HCT116 (cell line): ENCODE measurements at regions of chr11 and their contacts with region 1.

Region 1: DNA sequence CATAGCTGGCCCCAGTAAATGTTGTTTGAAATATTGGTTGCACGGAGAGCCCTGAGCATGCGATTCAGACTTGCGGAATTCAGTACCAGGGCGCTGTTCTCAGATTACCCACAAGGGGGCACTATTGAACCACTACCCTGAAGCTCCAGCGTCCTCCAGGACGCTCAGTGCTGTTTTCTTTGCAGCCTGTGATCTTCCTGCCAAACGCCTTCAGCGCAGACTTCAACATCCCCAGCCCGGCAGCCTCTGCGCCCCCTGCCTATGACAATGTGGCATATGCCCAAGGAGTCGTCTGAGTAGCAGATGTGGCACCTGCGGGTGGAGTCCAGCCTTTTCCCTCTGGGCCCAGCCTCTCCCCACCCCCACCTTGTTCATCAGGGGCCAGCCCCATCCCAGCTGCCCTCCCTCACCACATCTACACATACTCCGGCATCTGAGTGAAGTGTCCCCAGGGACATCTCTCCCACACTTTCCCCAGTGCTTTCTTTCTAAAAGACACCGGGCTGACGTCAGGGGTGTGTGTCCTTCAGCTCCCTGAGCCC is 9.6 kb upstream of the MS4A10 start:
- DNase-seq: peak; percentile 85
- ATAC-seq: peak; percentile 95
- H3K4me3 ChIP-seq: no peak overlapping the region
- H3K27ac ChIP-seq: no peak overlapping the region; the same call in 1 of the 2 replicates
- H3K4me1 ChIP-seq: peaks cover 0 to 19% of the 10 kb centered on the region in 2 experiments; a peak in 3 of 4 replicates
- H3K27me3 ChIP-seq: no peaks in the 10 kb centered on the region
- CTCF ChIP-seq: peak; percentile 87 to 92 (median 90)
- POLR2A ChIP-seq: no peak
- RAD21 ChIP-seq: peak; percentile 91

Region 2: DNA sequence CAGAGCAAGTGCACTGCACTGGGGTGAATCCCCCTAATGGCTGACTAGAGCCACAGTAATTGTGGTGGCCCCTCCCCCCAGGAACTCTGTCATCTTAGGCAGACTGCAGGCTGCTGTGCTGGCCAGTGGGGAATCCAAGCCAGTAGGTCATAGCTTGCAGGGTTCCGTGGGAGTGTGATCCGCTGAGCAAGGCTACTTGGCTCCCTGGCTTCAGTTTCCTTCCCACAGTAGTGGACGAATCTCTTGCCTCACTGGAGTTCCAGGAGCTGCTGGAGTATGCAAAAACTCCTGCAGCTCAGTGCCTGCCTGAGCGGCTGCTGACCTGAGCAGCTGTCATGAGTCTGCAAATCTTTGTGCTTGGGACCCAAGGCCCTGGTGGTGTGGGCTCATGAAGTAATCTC is 883.7 kb before region 1 on chr11:
- CTCF ChIA-PET with region 1: no interaction called
- POLR2A ChIA-PET with region 1: no interaction called
- RAD21 ChIA-PET with region 1: no interaction called
- intact Hi-C with region 1: no loop called
- DNase-seq: no peak
- ATAC-seq: no peak; the same call in 1 of the 2 replicates
- H3K4me3 ChIP-seq: no peak overlapping the region
- H3K27ac ChIP-seq: no peak overlapping the region
- H3K4me1 ChIP-seq: no peaks in the 10 kb centered on the region
- H3K27me3 ChIP-seq: no peaks in the 10 kb centered on the region
- CTCF ChIP-seq: no peak
- POLR2A ChIP-seq: no peak
- RAD21 ChIP-seq: no peak

Region 3: DNA sequence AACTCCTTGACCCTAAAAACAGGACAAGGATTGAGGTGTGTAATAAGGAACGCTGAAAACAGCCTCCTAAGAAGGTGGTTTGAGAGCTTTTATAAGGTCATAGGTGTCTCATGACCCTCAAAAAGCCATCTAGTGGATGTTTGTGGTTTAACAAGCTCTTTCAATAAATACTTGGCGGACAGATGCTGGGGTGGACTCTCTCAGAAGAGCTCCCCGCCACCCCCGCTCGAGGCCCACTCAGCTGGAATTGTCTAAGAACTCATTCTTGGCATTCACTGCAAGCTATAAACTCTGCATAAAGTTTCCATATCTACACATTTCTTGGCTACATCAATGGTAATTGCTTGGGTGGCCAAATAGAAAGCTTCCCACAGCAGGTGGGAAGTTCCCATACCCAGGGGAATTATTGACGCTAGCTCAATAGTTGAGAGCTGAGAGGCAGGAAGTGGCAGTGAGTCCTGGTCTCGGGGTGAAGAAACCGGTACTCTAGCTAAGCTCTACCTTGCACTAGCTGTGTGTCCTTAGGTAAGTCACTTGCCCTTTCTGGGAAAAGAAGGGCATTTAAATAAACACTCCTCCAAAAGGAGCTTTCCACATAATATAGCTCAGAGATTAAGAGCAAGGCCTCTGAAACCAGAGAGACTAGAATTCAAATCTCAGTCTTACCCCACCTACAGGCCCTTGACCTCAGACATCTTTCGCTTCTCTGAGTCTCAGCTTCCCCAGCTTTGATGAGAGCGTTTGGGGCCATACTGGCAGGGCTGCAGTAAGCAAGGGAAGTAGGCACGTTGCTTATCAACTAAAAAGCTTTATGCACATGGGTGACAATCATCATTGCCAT is 12.4 kb before region 1 on chr11:
- CTCF ChIA-PET with region 1: interaction called, 31 read pairs
- POLR2A ChIA-PET with region 1: interaction called, 3 read pairs
- RAD21 ChIA-PET with region 1: interaction called in 1 of 2 experiments, 3 read pairs
- intact Hi-C with region 1: no loop called
- DNase-seq: peak; percentile 7
- ATAC-seq: peak; percentile 49
- H3K4me3 ChIP-seq: no peak overlapping the region
- H3K27ac ChIP-seq: no peak overlapping the region
- H3K4me1 ChIP-seq: peaks cover 8 to 10% of the 10 kb centered on the region in 2 experiments; a peak in 2 of 4 replicates
- H3K27me3 ChIP-seq: 0 out of 2 replicates have a peak, but pooled peaks cover 5% of the 10 kb centered on the region
- CTCF ChIP-seq: peak; percentile 34 to 59 (median 47); a peak in 5 of 6 replicates
- POLR2A ChIP-seq: no peak
- RAD21 ChIP-seq: peak; percentile 21; the same call in 1 of the 2 replicates

Region 4: GRCh38 chr11:60887556-60887955 is 112.1 kb after region 1 on chr11:
- CTCF ChIA-PET with region 1: interaction called, 21 read pairs
- POLR2A ChIA-PET with region 1: interaction called, 3 read pairs
- RAD21 ChIA-PET with region 1: interaction called, 4 to 6 read pairs
- intact Hi-C with region 1: loop called (anchors 2 kb)
- DNase-seq: peak; percentile 31
- ATAC-seq: peak; percentile 95
- H3K4me3 ChIP-seq: no peak overlapping the region
- H3K27ac ChIP-seq: no peak overlapping the region
- H3K4me1 ChIP-seq: no peaks in the 10 kb centered on the region
- H3K27me3 ChIP-seq: no peaks in the 10 kb centered on the region
- CTCF ChIP-seq: peak; percentile 61; a peak in 5 of 6 replicates
- POLR2A ChIP-seq: no peak
- RAD21 ChIP-seq: peak; percentile 78

Region 5: DNA sequence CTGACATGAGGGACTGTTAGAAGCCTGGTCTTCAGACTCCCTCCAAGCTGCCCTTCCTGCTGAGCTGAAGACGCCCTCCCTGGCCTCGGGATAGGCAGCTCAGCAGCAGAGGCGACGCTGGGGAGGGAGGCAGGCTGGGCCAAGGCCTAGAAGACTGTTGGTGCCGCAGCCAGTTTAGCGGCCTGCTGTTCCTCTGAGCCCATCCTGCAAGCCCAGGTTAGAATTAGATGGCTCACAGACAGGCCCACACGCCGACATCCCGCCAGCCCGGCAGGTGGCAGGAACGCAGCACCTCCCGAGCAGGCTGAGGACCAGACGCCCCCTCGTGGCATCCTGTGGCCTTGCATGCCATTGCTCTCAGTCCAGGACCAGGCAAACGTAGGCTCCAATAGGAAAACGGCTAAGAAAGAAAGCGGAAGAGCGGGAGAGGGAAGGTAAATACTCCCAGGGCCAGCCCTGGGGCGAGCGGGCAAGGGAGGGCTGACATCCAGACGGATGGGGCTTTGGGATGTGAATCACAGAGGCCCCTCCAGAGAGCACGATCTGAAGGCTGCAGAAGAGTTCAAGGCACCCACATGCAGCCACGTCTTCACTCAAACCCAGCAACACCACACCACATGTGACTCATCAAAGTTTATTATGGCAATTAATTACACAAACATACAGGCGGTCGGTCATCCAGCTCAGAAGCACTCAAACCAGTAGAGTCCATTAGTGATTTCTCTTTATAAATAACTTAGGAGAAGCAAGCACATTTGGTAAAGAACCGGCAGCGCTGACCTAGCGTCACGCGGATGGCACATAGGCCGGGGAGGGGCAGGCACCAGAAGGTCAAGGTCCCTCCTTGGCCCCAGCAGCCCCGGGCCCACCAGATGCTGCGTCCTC is 354.4 kb after region 1 on chr11:
- CTCF ChIA-PET with region 1: no interaction called
- POLR2A ChIA-PET with region 1: no interaction called
- RAD21 ChIA-PET with region 1: no interaction called
- intact Hi-C with region 1: loop called (anchors 1 kb)
- DNase-seq: peak; percentile 73
- ATAC-seq: peak; percentile 95
- H3K4me3 ChIP-seq: peak overlapping the region in 1 of 2 experiments; percentile 37; a peak in 3 of 4 replicates
- H3K27ac ChIP-seq: peak overlapping the region; percentile 45
- H3K4me1 ChIP-seq: peaks cover 6 to 18% of the 10 kb centered on the region in 2 experiments; a peak in 3 of 4 replicates
- H3K27me3 ChIP-seq: no peaks in the 10 kb centered on the region
- CTCF ChIP-seq: peak; percentile 100
- POLR2A ChIP-seq: no peak
- RAD21 ChIP-seq: peak; percentile 98

Region 6: DNA sequence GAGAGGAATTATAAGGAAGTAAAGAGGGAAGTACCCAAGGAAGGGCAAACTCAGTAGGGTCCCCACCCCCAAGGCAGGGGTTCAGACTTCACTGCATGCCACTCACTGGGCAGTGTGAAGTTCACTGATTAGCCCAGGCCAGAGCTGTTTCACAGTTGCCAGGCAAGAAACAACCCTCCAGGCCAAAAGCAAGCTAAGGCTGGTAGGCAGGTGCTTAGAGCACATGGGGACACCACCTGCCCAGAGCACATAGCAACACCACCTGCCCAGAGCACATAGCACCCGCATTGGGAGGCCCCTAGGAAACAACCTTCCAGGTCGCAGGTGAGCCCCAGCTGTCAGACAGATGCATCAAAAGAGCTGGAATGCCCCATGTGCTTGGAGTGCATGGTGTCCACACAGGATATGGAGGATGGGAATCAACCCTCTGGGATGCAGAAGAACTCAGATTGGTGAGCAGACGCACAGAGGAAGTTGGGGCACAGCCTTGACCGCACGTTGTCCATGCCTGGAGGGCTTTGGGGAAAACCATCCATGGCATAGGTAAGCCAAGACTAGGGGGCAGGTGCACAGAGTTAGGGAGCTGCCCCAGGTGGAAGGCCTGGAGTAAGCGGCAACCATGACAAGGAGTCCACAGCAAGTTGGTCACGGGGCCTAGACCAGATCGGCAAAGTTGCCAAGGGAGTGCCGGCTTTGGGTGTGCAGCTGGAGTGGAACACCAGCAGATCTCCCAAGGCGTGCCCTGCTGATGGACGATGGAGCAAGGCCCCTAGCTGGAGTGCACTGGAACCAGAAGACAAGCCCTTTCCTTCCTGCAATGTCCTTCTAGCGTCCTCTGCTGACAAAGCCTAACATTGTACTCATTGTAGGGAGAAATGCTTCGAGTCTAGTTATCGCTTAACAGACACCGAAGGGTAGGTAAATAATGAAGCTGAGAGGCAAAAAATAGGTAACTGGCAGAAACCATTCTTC is 609.1 kb after region 1 on chr11:
- CTCF ChIA-PET with region 1: no interaction called
- POLR2A ChIA-PET with region 1: no interaction called
- RAD21 ChIA-PET with region 1: no interaction called
- intact Hi-C with region 1: loop called (anchors 10 kb)
- DNase-seq: no peak
- ATAC-seq: peak; percentile 31; the same call in 1 of the 2 replicates
- H3K4me3 ChIP-seq: no peak overlapping the region
- H3K27ac ChIP-seq: no peak overlapping the region; the same call in 1 of the 2 replicates
- H3K4me1 ChIP-seq: no peaks in the 10 kb centered on the region
- H3K27me3 ChIP-seq: no peaks in the 10 kb centered on the region
- CTCF ChIP-seq: peak; percentile 3 to 32 (median 20); a peak in 2 of 6 replicates
- POLR2A ChIP-seq: no peak
- RAD21 ChIP-seq: peak; percentile 36